Dorsolateral prefrontal cortex (tissue), 120 donors: ENCODE measurements at regions of chr1 and their contacts with region 1.

Region 1: DNA sequence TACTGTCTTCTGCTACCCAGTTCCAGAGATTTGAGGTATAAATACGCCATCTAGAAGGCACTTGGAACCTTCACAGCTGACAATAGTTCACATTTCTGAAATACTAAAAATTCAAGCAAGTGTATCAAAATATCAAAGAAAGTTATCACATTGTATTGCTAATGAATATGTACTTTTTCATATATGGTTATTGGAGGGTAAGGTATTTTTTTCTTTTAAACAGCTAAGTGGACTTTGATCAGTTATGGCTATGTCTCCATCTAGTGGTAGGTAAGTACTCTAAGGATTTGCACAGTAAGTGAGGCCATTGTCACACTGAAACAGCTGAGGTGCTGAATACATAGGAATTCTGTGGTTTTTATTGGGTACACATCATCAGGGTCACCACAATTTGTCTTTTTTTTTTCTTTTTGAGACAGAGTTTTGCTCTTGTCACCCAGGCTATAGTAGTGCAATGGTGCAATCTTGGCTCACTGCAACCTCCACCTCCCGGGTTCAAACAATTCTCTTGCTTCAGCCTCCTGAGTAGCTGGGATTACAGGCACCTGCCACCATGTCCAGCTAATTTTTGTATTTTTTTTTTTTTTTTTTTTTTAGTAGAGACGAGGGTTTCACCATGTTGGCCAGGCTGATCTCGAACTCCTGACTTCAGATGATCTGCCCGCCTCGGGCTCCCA is 49.1 kb upstream of the CR2 start:
- DNase-seq: no peak
- H3K4me3 ChIP-seq: no peak overlapping the region
- H3K27ac ChIP-seq: peak overlapping the region in 33 of 59 donors; percentile 27 to 96 (median 89)
- H3K27me3 ChIP-seq: peaks cover 0 to 5% (median 0%) of the 10 kb centered on the region in 45 donors
- CTCF ChIP-seq: peak; percentile 60 to 97 (median 87)

Region 2: DNA sequence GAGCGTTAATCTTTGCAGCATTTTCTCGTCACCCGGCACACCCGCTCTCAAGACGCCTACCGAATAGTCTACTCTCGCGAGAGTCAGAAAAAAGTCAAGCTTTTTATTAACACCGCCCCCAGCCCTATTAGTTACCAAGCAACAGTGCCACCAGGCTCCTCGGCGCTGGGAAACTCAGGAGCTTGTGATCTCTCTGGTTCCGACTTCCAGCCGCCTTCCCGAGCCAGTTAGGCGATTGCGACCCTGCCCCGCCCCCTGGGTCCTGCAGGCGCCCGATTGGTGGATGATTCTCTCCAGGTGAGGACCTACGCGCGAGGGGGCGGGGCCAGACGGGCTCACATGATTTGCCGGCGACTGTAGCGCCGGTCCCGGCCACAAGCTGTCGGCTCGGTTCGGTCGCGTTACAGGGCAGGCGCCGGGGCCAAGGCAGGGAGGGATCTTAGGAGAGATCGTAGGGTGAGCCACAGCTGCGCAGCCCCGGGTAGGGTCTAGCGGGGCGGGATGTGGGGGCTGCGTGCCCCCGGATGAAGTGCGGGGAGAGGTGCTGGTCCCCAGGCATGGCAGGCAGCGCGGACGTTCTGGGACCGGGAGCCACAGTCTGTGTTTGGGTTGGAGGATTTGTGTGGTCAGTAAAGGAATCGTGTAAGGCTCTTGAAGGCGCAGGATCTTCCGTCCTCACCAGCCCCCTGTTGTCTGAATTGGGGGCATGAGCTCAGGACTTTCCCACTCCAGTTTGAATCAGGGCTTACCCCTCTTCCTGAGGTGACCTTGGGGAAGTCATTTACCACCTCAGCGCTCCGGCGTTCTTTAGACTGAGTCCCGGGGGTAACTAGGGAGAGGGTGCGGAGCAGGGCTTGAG is 351.8 kb before region 1 on chr1 and contains the start of gene PFKFB2:
- intact Hi-C with region 1: loop called in 1 of 2 experiments (anchors 10 kb)
- DNase-seq: peak; percentile 92 to 99 (median 98)
- H3K4me3 ChIP-seq: peak within 1 kb of the TSS; percentile 58 to 99 (median 81)
- H3K27ac ChIP-seq: peak within 1 kb of the TSS; percentile 55 to 98 (median 93)
- H3K27me3 ChIP-seq: no peaks in the 10 kb centered on the region
- CTCF ChIP-seq: peak in 42 of 56 donors; percentile 10 to 60 (median 37)
- total RNA-seq, gene PFKFB2: 18.5 to 126 (median 47.9) TPM

Region 3: DNA sequence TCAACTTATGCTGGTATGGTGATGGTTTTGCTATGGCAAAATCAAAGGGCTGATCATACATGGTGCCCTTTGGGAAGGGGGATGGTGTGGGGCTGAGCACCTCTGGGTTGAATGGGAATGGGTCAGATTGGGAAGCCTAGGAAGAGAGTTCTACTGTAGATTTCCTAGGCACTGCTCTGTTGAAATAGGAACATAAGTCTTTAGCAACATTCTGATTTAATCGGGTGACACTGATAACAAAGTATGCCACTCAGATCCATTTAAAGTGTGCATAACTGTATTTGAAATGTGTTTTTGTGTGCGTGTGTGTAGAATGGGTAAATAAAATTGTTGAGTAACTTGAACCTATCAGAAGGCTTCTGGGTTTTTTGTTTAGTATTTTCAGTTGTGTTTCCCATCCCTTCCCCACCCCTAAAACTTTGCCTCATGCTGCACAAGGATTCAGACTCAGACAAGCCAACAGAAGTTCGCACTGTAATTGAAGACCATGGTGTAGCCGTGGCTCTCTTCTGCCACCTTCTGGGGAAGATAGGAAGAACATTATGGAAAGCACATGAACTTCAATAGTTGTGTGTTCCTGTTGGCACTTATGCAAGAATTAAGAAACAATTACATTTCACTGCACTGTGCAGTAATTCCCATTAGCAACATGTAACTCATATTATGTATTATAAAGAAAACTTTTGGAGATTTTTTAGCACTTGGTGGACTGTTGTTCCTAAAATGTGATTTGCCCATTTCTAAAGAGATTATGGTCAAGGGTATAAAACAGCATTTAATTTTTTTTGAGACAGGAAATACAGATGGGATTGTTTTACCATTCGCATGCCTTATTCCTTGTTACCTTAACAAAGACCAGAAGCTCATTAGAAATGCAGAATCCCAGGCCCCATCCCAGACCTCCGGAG is 327.3 kb before region 1 on chr1:
- intact Hi-C with region 1: loop called (anchors 2 to 5 kb)
- DNase-seq: peak in 5 of 10 donors; percentile 31 to 71 (median 48)
- H3K4me3 ChIP-seq: no peak overlapping the region
- H3K27ac ChIP-seq: peak overlapping the region in 6 of 59 donors; percentile 2 to 22 (median 16)
- H3K27me3 ChIP-seq: no peaks in the 10 kb centered on the region
- CTCF ChIP-seq: peak; percentile 54 to 96 (median 87)

Region 4: GRCh38 chr1:207084701-207085180 is 320.2 kb before region 1 on chr1:
- intact Hi-C with region 1: loop called (anchors 2 to 5 kb)
- DNase-seq: peak in 5 of 10 donors; percentile 18 to 46 (median 35)
- H3K4me3 ChIP-seq: no peak overlapping the region
- H3K27ac ChIP-seq: no peak overlapping the region
- H3K27me3 ChIP-seq: no peaks in the 10 kb centered on the region
- CTCF ChIP-seq: peak; percentile 28 to 80 (median 63)

Region 5: DNA sequence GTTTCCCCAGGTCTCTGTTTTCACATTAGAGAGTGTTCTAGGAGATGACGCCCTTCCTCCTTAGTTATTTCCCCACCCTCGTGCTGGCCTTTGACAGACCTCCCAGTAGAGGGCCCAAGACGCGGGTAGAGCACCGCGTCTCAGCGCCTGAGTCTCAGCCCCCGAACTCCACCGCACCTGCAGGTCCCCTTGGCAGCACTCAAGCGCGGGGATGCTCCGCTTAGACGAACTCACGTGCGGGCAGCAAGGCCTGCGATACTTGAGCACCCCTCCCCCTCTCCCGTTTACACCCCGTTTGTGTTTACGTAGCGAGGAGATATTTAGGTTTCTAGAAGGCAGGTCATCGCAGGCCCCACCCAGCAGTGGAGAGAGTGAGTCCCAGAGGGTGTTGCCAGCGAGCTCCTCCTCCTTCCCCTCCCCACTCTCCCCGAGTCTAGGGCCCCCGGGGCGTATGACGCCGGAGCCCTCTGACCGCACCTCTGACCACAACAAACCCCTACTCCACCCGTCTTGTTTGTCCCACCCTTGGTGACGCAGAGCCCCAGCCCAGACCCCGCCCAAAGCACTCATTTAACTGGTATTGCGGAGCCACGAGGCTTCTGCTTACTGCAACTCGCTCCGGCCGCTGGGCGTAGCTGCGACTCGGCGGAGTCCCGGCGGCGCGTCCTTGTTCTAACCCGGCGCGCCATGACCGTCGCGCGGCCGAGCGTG is 83.8 kb before region 1 on chr1 and contains the start of gene CD55:
- intact Hi-C with region 1: loop called (anchors 2 kb)
- DNase-seq: peak; percentile 73 to 93 (median 88)
- H3K4me3 ChIP-seq: peak within 1 kb of the TSS; percentile 57 to 98 (median 88)
- H3K27ac ChIP-seq: peak within 1 kb of the TSS; percentile 35 to 98 (median 92)
- H3K27me3 ChIP-seq: no peaks in the 10 kb centered on the region
- CTCF ChIP-seq: peak in 27 of 56 donors; percentile 6 to 50 (median 17)
- total RNA-seq, gene CD55: 11.7 to 83.5 (median 35.7) TPM

Region 6: DNA sequence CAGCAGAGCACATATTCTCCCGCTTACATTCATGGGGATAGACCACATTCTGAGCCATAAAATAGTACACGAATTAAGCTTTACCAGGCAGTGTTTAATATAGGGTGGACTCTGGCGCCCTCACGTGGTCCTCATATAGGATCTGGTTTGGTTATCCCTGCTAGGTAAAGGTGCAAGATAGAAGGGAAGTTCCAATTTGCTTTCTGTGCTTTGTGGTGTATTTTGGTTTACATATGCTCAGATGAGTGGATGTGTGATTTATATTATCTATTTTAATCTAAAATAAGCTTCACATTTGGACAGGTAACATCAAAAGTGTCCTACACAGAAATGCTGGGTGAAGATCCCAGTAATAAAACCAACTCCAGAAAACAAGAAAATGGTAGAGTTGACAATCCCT is 94.6 kb after region 1 on chr1:
- intact Hi-C with region 1: loop called (anchors 2 to 5 kb)
- DNase-seq: peak; percentile 48 to 89 (median 73)
- H3K4me3 ChIP-seq: no peak overlapping the region
- H3K27ac ChIP-seq: peak overlapping the region in 1 of 59 donors; percentile 26
- H3K27me3 ChIP-seq: peaks cover 0 to 32% (median 13%) of the 10 kb centered on the region in 45 donors
- CTCF ChIP-seq: peak; percentile 2 to 90 (median 77)